Posterior cingulate gyrus (tissue), 11 donors: ENCODE measurements at regions of chr12 and their contacts with region 1.

Region 1: GRCh38 chr12:56810918-56811317 is 47.8 kb downstream of the HSD17B6 start:
- DNase-seq: no peak

Region 2: DNA sequence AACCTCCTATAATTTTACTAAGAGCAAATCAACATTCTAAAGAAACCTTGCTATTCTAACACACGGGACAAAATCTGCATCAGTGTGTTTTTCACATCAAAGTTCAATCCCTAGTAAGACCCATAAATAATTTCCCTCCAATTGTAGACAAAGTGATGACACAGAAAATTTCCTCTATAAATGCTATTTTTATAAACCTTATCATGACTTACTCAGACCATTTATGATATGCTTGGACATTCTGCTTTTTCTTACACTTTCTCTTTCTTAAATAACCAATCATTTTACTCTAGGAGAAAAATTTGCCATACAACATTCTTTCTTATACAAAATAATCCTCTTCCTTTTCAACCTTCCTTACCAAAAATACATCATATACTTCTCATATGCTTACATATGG is 56.3 kb after region 1 on chr12:
- intact Hi-C with region 1: loop called (anchors 2 kb)
- DNase-seq: no peak